ENCODE measurements at regions of chr5 and their contacts with region 1.

Region 1: DNA sequence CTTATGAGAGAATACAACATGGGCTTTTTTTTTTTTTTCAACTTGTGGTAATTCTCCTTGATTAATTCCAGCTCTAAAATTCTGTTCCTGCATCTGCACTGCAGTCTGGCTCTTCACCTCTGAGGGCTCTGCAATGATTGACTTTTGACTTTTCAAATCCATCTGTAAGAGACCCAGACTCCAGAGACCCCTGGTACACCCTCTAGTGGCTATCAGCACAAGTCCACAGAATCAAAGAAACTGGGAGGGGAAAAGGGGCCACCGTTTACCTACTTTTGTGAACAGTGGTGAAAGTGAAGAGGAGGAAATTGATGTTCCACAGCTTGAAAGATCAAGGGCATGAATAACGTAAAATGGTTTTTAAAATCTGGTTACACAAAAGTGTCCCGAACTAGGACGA is 151.6 kb downstream of the SLIT3 start:
- DNase-seq: peak; percentile 51
- H3K4me3 ChIP-seq: no peak overlapping the region; a peak in 1 of 4 replicates
- H3K27ac ChIP-seq: peak overlapping the region in 1 of 2 experiments; percentile 97; a peak in 3 of 4 replicates
- H3K4me1 ChIP-seq: peaks cover 0 to 76% of the 10 kb centered on the region in 2 experiments; a peak in 2 of 4 replicates
- H3K27me3 ChIP-seq: no peaks in the 10 kb centered on the region
- CTCF ChIP-seq: peak; percentile 57
- EP300 ChIP-seq: peak in 1 of 2 experiments; percentile 58; a peak in 1 of 4 replicates
- RAD21 ChIP-seq: peak; percentile 69

Region 2: DNA sequence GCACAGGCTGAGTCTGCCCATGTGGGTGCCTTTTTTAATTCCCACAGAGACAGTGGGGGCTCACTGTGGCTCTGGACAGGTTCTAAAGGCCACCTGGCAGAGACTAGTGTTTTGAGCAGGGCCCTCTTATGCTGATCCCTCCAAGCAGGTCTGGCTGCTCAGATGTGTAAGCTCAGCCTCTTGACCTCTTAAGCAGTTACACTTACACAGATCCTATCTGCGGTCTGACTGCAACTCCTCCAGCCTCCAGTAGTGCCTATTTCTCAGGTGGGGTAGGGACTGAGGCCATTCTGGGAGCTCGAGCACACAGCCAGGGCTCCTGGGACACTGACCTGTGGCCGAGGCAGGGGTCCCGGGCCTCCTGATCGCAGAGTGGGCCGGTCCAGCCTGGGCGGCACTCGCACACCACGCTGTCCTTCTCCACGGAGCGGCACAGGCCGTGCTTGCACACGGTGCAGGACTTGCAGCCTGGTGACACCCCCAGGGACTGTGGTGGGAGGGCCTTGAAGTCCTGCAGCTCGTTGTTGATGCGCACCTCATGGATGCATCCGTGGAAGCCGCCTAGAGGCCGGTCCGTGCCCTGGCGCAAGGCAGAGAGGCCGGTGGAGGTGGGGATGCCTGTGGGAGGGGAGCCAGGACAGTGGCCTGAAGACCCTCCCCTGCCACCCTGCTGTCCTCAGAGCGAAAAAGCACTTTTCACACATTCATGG is 478.3 kb before region 1 on chr5:
- CTCF ChIA-PET with region 1: no interaction called
- POLR2A ChIA-PET with region 1: no interaction called
- DNase-seq: no peak
- H3K4me3 ChIP-seq: no peak overlapping the region
- H3K27ac ChIP-seq: no peak overlapping the region; a peak in 1 of 4 replicates
- H3K4me1 ChIP-seq: peaks cover 0 to 3% of the 10 kb centered on the region in 2 experiments; a peak in 1 of 4 replicates
- H3K27me3 ChIP-seq: no peaks in the 10 kb centered on the region
- CTCF ChIP-seq: no peak
- EP300 ChIP-seq: no peak
- RAD21 ChIP-seq: no peak

Region 3: DNA sequence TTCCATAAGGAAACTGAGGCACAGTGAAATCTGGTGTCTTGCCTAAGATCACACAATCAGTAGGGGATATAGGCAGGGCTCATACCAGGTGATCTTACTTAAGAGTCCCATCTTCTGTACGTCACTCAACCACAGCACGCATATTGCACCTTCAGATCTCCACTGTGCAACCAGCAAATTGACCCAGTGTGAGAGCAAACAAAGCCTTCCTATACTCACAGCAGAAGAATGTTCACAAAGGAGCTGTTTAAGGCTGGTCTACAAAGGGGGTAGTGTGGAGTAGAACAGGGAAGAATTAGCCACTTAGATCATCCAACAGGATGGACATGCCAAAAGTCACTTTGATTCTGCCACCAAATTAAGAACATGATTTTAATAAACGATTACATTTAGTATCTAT is 154.3 kb before region 1 on chr5:
- CTCF ChIA-PET with region 1: interaction called, 97 read pairs
- POLR2A ChIA-PET with region 1: interaction called, 3 read pairs
- DNase-seq: no peak
- H3K4me3 ChIP-seq: no peak overlapping the region
- H3K27ac ChIP-seq: no peak overlapping the region
- H3K4me1 ChIP-seq: peaks cover 0 to 26% of the 10 kb centered on the region in 2 experiments; a peak in 2 of 4 replicates
- H3K27me3 ChIP-seq: no peaks in the 10 kb centered on the region
- CTCF ChIP-seq: no peak
- EP300 ChIP-seq: no peak
- RAD21 ChIP-seq: no peak

Region 4: GRCh38 chr5:169003721-169004541 is 145.4 kb before region 1 on chr5:
- CTCF ChIA-PET with region 1: interaction called, 25 read pairs
- POLR2A ChIA-PET with region 1: interaction called, 4 read pairs
- DNase-seq: peak; percentile 72
- H3K4me3 ChIP-seq: 0 out of 4 replicates have a peak overlapping the region, but pooled peaks of 1 of the 2 experiments have one; percentile 1
- H3K27ac ChIP-seq: peak overlapping the region; percentile 86 to 98
- H3K4me1 ChIP-seq: peaks cover 23 to 53% of the 10 kb centered on the region in 2 experiments
- H3K27me3 ChIP-seq: no peaks in the 10 kb centered on the region
- CTCF ChIP-seq: peak; percentile 57
- EP300 ChIP-seq: peak; percentile 10 to 75; a peak in 1 of 4 replicates
- RAD21 ChIP-seq: peak; percentile 78

Region 5: DNA sequence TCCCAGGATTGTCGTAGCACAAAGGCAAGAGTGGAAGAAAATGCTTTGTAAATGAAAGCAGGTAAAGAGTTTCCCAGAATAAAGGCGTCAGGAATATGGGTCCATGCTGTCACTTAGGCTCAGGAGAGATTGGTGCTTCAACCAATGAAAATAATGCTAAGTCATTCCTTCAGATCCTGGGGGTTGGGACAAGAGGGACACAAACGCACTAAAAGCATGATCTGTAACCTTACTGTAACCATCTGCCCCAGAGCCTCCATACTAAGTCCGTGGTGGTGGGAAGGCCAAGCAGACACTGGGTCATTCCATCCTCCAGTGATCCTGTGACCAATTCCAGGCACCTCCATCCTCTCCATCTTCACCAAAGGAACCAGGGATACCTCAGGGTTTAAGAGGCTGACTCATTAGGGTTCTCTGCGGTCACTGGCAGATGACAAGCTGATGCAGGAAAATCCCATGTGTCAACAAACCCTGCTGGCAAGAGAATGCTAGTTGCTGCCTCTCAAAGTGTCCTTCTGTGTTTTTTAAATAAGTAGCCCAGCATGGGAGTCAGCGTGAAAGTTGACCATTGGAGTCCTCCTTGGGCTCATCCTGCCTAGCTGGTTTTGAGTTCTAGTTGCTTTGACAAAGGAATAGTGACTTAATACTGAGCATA is 48.8 kb before region 1 on chr5:
- CTCF ChIA-PET with region 1: interaction called, 20 read pairs
- POLR2A ChIA-PET with region 1: interaction called, 13 read pairs
- DNase-seq: no peak
- H3K4me3 ChIP-seq: no peak overlapping the region
- H3K27ac ChIP-seq: peak overlapping the region in 1 of 2 experiments; percentile 98; a peak in 2 of 4 replicates
- H3K4me1 ChIP-seq: peaks cover 0 to 51% of the 10 kb centered on the region in 2 experiments; a peak in 3 of 4 replicates
- H3K27me3 ChIP-seq: no peaks in the 10 kb centered on the region
- CTCF ChIP-seq: no peak
- EP300 ChIP-seq: no peak
- RAD21 ChIP-seq: no peak

Region 6: DNA sequence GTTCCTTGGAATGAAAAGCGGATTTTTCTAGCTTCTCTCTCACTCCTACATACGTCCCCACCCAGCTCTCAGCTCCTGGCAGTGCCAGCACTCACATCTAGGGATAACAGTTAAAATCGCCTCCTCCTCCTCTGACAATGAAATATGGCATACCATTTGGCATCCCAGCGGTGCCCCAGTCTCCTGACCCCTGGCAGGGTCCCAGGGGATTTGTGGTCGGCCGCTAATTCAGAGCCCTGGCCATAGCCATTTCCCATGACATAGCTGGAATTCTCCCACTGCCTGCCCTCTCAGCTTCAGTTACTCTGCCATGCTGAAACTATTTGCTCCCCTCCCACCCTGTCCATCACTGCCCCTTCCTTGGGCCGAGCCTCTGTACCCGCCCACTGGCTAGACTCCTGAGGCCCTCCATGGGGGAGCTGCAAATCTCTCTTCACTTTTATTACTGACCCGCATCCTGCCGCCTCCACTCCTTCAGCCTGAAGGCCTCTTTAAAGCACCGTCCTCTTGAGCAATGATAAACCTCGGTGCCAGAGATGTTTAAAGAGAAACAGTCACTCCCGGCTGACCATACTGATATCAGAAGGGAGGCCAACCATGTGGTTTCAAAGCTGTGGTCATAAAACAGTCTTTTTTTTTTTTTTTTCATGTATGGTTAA is 11.8 kb after region 1 on chr5:
- CTCF ChIA-PET with region 1: interaction called, 10 read pairs
- POLR2A ChIA-PET with region 1: interaction called, 3 read pairs
- DNase-seq: peak; percentile 25
- H3K4me3 ChIP-seq: no peak overlapping the region
- H3K27ac ChIP-seq: peak overlapping the region; percentile 90 to 97
- H3K4me1 ChIP-seq: peaks cover 33 to 37% of the 10 kb centered on the region in 2 experiments
- H3K27me3 ChIP-seq: no peaks in the 10 kb centered on the region
- CTCF ChIP-seq: no peak
- EP300 ChIP-seq: peak; percentile 44 to 93; a peak in 3 of 4 replicates
- RAD21 ChIP-seq: no peak

Region 7: GRCh38 chr5:169390265-169390664 is 240.9 kb after region 1 on chr5:
- CTCF ChIA-PET with region 1: no interaction called
- POLR2A ChIA-PET with region 1: no interaction called
- DNase-seq: no peak
- H3K4me3 ChIP-seq: no peak overlapping the region
- H3K27ac ChIP-seq: no peak overlapping the region
- H3K4me1 ChIP-seq: no peaks in the 10 kb centered on the region; a peak in 2 of 4 replicates
- H3K27me3 ChIP-seq: no peaks in the 10 kb centered on the region; the same call in 1 of the 2 replicates
- CTCF ChIP-seq: no peak; the same call in 1 of the 2 replicates
- EP300 ChIP-seq: no peak
- RAD21 ChIP-seq: no peak

Region 8: DNA sequence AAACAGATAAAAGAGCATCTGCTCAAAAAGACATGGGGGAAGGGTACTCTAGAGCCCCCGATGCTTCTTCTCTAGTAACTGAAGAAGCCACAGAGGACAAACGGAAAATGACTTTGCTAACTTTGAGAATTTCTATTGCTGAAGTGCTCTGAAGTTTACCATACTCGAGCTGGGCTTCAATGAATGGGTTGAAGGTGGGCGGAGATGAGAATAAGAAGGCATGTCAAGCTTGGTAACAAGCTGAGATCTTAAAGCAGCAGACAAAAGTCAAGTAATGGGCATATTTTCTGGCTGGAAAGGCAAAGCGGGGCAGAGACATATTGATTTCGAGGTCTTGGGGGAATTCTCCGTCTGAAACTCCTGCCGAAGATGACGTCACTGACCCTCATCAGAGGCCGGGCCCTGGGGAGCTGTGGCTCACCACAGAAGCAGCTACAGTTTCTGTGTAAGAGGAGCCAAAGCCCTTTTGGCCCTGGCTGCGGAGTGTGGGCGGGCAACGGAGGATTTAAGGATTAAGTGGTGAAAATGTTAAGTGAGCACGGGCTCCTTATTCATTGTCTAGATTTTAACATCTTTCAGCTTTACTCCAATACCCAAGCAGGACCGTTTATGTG is 267.4 kb after region 1 on chr5:
- CTCF ChIA-PET with region 1: no interaction called
- POLR2A ChIA-PET with region 1: no interaction called
- DNase-seq: no peak
- H3K4me3 ChIP-seq: no peak overlapping the region
- H3K27ac ChIP-seq: no peak overlapping the region
- H3K4me1 ChIP-seq: peaks cover 0 to 9% of the 10 kb centered on the region in 2 experiments; a peak in 2 of 4 replicates
- H3K27me3 ChIP-seq: no peaks in the 10 kb centered on the region
- CTCF ChIP-seq: no peak
- EP300 ChIP-seq: no peak
- RAD21 ChIP-seq: no peak

Region 9: GRCh38 chr5:169670769-169671525 is 521.6 kb after region 1 on chr5:
- CTCF ChIA-PET with region 1: no interaction called
- POLR2A ChIA-PET with region 1: no interaction called
- DNase-seq: no peak
- H3K4me3 ChIP-seq: no peak overlapping the region
- H3K27ac ChIP-seq: no peak overlapping the region
- H3K4me1 ChIP-seq: peaks cover 11 to 13% of the 10 kb centered on the region in 2 experiments; a peak in 3 of 4 replicates
- H3K27me3 ChIP-seq: no peaks in the 10 kb centered on the region
- CTCF ChIP-seq: no peak
- EP300 ChIP-seq: no peak
- RAD21 ChIP-seq: no peak